Activated B cell treated with CpG ODN at 0.5 μM for 24 hours (primary cell): ENCODE measurements at regions of chr17 and their contacts with region 1.

Region 1: DNA sequence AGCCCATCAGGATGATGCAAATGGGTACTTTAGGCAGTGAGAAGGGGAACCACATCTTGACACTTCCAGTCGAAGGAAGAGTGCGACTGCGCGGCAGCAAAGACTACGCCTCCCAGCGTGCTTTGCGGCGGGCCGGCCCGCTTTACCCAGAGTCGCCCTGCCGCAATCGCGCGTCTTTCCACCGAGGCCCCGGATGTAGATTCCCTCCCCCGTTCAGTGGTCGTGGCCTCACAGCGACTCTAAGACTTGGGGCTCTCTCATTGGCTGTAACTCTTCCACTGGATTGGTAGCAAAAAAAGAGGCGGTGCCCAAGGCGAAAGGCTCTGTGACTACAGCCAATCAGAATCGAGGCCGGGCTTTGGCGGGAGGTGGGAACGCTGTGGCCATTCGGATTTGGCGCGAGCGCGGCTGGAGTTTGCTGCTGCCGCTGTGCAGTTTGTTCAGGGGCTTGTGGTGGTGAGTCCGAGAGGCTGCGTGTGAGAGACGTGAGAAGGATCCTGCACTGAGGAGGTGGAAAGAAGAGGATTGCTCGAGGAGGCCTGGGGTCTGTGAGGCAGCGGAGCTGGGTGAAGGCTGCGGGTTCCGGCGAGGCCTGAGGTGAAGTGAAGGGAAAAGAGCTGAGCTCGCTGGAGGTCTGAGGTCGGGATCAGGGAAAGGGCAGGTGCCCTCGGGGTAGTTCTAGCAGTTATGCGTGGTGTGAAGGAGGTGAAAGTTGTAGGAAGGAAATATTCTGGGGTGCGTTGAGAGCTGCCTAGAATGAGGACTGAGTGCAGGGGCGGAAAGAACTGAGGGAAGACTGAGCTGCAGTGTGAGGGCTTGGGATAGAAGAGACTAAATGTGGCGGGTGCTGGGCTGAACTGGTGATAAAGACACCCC is at the start of gene CDC6:
- DNase-seq: peak; percentile 93
- ATAC-seq: peak; percentile 95
- H3K4me3 Mint-ChIP-seq: peak within 1 kb of the TSS; percentile 97
- H3K27ac Mint-ChIP-seq: peak within 1 kb of the TSS; percentile 87
- H3K4me1 Mint-ChIP-seq: peaks cover 18% of the 10 kb centered on the region
- H3K27me3 Mint-ChIP-seq: no peaks in the 10 kb centered on the region
- CTCF ChIP-seq: no peak
- total RNA-seq, gene CDC6: 9.2 and 9.7 TPM in 2 replicates

Region 2: GRCh38 chr17:39927101-39927928 is 360.4 kb before region 1 on chr17 and contains the starts of genes LRRC3C and ORMDL3:
- CTCF ChIA-PET with region 1: no interaction called
- POLR2A ChIA-PET with region 1: no interaction called
- intact Hi-C with region 1: loop called (anchors 10 kb)
- DNase-seq: peak; percentile 91
- ATAC-seq: peak; percentile 92
- H3K4me3 Mint-ChIP-seq: peak within 1 kb of the TSS; percentile 97
- H3K27ac Mint-ChIP-seq: peak within 1 kb of the TSS; percentile 82
- H3K4me1 Mint-ChIP-seq: peaks cover 40% of the 10 kb centered on the region
- H3K27me3 Mint-ChIP-seq: no peaks in the 10 kb centered on the region
- CTCF ChIP-seq: no peak
- total RNA-seq, gene LRRC3C: not detected in 2 replicates
- total RNA-seq, gene ORMDL3: 38.5 and 49.1 TPM in 2 replicates

Region 3: GRCh38 chr17:40018211-40019121 is 269.3 kb before region 1 on chr17:
- CTCF ChIA-PET with region 1: interaction called, 8 read pairs
- POLR2A ChIA-PET with region 1: no interaction called
- intact Hi-C with region 1: loop called (anchors 1 kb)
- DNase-seq: no peak
- ATAC-seq: no peak
- H3K4me3 Mint-ChIP-seq: no peak overlapping the region
- H3K27ac Mint-ChIP-seq: no peak overlapping the region
- H3K4me1 Mint-ChIP-seq: peaks cover 5% of the 10 kb centered on the region
- H3K27me3 Mint-ChIP-seq: peaks cover 2% of the 10 kb centered on the region
- CTCF ChIP-seq: no peak

Region 4: DNA sequence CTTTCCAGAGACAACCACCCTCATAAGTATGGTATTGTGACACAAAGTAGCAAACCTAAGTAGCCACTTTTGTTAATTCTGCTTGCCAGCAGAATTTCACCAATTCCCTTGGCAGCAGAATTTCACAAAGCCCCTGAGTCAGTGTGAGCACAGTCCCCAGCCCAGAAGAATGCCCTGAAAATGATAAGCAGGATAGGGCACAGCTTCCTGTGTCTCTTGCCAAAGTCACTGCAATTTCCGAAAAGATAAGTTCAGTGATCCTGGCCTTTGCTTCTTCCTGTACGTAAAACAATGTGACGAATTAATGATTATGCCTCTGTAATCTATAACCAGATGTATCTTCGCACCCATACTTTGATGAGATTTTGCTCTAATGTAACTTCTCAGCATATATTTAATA is 84.6 kb before region 1 on chr17:
- CTCF ChIA-PET with region 1: interaction called, 26 read pairs
- POLR2A ChIA-PET with region 1: no interaction called
- intact Hi-C with region 1: loop called (anchors 1 kb)
- DNase-seq: no peak
- ATAC-seq: no peak
- H3K4me3 Mint-ChIP-seq: no peak overlapping the region
- H3K27ac Mint-ChIP-seq: no peak overlapping the region
- H3K4me1 Mint-ChIP-seq: peaks cover 4% of the 10 kb centered on the region
- H3K27me3 Mint-ChIP-seq: no peaks in the 10 kb centered on the region
- CTCF ChIP-seq: no peak

Region 5: DNA sequence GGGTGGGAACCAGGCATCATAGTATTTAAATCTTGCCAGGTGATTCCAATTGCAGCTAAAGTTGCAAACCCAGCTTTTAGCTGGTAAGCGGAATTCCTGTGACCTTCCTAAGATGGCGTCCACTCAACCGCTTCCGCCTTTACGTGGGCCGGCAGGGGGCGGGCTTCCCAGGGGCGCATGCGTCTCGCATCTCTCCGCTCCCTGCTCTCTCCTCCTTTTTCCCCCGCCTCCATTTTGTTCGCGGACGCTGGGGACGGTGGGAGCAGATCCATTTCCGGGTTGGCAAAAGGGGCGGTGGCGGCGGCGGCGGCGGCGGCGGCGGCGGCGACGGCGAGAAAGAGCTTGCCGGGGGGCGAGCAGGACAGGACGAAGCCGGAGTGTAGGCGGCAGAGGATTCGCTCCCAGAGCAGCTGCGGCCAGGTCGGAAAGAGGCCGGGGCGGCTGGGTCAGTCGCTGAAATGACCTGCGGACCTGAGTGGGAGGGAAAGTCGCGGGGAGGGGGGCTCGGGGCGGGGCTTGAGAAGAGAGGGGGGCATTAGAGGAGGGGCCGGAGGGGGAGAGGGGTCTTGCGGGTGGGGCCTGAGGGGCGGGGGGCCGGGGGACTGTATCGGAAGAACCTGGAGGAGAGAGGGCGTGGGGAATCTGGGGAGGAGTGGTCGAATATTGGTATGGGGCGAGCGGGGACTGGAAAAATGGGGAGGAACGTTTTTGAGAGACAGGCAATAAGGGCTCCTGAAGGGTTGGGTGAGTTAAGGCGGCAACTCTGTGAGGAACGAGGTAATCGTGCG is 68.5 kb before region 1 on chr17 and contains the start of gene WIPF2:
- CTCF ChIA-PET with region 1: interaction called, 4 read pairs
- POLR2A ChIA-PET with region 1: interaction called, 6 read pairs
- intact Hi-C with region 1: loop called (anchors 1 kb)
- DNase-seq: peak; percentile 92
- ATAC-seq: peak; percentile 88
- H3K4me3 Mint-ChIP-seq: peak within 1 kb of the TSS; percentile 97
- H3K27ac Mint-ChIP-seq: peak within 1 kb of the TSS; percentile 100
- H3K4me1 Mint-ChIP-seq: peaks cover 30% of the 10 kb centered on the region
- H3K27me3 Mint-ChIP-seq: no peaks in the 10 kb centered on the region
- CTCF ChIP-seq: no peak
- total RNA-seq, gene WIPF2: 28.4 and 32.9 TPM in 2 replicates

Region 6: DNA sequence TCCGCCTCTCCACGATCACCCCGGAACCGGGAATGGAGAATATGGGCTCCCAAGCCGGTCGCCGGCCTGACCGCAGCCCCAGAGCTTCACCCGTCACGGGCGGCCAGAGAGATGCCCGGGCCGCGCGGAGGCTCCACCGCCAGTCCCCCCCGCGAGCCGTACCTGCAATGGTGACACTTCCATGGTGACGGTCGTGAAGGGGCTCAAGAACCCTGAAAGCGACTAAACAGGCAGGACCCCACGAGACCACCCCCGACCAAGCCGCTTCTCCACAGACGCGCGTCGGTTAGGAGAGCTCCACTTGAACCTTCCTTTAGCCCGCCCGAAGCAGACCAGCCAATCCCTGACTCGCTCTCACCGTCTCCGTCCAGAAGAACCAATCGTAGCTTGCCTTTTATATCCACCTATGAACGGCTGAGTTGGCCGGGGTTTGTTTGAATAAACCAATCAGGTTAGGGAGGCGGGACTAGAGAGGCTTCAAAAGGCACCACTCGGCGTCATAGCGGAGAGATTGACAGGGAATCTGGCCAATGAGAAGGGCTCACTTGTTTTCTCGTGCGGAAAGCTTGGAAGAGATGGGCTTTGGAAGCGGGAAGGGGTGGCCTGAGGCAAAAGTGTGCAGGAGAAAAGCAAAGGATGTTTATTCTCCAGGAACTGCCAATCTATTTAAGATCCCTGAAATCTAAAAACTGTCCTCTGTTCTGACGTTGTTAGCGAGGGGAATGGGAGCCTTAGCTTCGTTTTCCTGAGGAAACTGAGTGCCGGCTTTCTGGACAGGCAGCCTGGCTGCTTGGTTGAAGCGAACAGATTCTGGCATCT is 130.1 kb after region 1 on chr17 and contains the start of gene TOP2A:
- CTCF ChIA-PET with region 1: no interaction called
- POLR2A ChIA-PET with region 1: no interaction called
- intact Hi-C with region 1: loop called (anchors 5 kb)
- DNase-seq: peak; percentile 91
- ATAC-seq: peak; percentile 100
- H3K4me3 Mint-ChIP-seq: peak within 1 kb of the TSS; percentile 94
- H3K27ac Mint-ChIP-seq: peak within 1 kb of the TSS; percentile 84
- H3K4me1 Mint-ChIP-seq: peaks cover 23% of the 10 kb centered on the region
- H3K27me3 Mint-ChIP-seq: no peaks in the 10 kb centered on the region
- CTCF ChIP-seq: no peak
- total RNA-seq, gene TOP2A: 5.3 and 6.6 TPM in 2 replicates